Left ventricle myocardium superior (tissue), 1 donor: ENCODE measurements at regions of chr5 and their contacts with region 1.

Region 1: DNA sequence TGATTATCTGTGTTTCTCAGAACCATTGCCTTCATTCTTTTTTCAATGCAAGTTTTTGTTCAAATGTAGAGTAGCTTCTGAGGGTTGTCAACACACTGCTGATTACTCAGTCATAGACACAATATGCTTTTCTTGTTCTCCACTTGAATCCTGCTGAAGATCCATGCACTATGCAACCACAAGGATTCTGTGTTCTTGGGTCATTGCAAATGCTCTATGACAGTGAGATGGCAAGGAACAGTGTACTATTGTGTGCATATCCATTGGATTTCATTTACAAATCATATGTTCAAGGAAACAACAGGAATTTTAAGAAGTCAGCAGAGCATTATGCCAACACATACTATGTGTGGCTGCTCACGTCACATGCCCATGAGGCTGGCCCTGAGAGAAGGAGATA is 1590.2 kb downstream of the EFNA5 start:
- DNase-seq: no peak
- ATAC-seq: no peak

Region 2: GRCh38 chr5:106019261-106019660 is 61.3 kb before region 1 on chr5:
- intact Hi-C with region 1: no loop called
- DNase-seq: no peak
- ATAC-seq: peak; percentile 63

Region 3: DNA sequence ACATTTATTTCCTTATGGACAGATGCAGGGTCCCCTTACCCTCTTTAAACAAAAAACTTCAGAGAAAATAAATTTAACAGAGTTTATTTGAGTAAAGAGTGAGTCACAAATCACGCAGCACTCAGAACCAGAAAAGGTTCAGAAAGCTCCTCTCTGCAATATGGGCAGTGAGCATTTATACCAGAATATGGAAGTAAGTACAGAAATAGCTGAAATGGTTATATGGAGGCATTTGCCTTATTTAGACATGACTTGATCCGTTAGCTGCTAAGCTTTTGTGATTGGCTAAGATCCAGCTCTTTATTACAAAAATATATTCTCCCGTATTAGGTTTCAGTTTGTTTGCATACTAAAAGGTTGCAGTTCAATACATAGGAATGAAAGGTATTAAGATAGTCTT is 36.2 kb after region 1 on chr5:
- intact Hi-C with region 1: loop called (anchors 2 kb)
- DNase-seq: no peak
- ATAC-seq: no peak

Region 4: DNA sequence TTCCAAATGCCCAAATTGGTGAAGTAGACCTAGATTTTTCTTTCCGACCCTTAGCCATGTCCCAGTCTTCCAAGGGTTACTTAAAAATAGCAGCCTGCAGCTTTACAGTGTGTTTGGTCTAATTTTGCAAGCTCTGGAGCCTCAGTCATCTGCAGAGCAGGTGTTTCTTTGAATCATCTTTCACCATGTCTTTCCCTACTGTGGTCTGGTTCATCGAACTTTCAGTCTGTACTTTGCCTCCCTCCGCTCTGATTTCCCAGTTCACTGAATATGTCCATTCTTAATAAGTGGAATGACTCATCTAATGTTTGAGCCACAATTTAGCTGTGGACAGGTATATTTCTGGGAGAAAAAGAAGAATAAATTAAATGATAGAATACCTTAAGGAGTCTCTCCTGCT is 529.5 kb after region 1 on chr5:
- intact Hi-C with region 1: no loop called
- DNase-seq: no peak
- ATAC-seq: no peak